Activated B cell treated with CpG ODN at 0.5 μM for 24 hours (primary cell): ENCODE measurements at regions of chr1 and their contacts with region 1.

Region 1: GRCh38 chr1:161706482-161707347 is at the start of gene FCRLA:
- DNase-seq: no peak
- ATAC-seq: peak; percentile 53
- H3K4me3 Mint-ChIP-seq: no peak within 1 kb of the TSS
- H3K27ac Mint-ChIP-seq: no peak within 1 kb of the TSS
- H3K4me1 Mint-ChIP-seq: peaks cover 28% of the 10 kb centered on the region
- H3K27me3 Mint-ChIP-seq: no peaks in the 10 kb centered on the region
- CTCF ChIP-seq: no peak
- total RNA-seq, gene FCRLA: 175 and 178 TPM in 2 replicates

Region 2: DNA sequence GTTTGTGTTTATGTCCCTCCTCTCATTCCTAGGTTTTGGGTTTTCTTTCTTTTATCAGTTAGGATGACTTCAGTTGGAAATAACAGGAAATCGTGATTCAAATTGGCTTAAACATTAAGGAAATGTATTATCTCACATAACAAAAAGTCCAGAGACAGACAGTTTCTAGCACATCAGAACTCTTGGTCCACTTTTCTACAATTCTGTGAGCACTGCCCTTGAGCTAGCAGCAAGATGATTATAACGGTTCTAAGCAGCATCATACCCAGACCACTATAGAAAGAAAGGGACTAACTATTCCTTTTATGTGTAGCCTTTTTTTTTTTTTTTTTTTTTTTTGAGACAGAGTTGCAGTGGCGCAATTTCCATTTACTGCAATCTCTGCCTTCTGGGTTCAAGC is 24.8 kb before region 1 on chr1:
- CTCF ChIA-PET with region 1: no interaction called
- POLR2A ChIA-PET with region 1: interaction called, 5 read pairs
- intact Hi-C with region 1: loop called (anchors 2 kb)
- DNase-seq: no peak
- ATAC-seq: no peak
- H3K4me3 Mint-ChIP-seq: no peak overlapping the region
- H3K27ac Mint-ChIP-seq: peak overlapping the region; percentile 1
- H3K4me1 Mint-ChIP-seq: no peaks in the 10 kb centered on the region
- H3K27me3 Mint-ChIP-seq: no peaks in the 10 kb centered on the region
- CTCF ChIP-seq: no peak

Region 3: DNA sequence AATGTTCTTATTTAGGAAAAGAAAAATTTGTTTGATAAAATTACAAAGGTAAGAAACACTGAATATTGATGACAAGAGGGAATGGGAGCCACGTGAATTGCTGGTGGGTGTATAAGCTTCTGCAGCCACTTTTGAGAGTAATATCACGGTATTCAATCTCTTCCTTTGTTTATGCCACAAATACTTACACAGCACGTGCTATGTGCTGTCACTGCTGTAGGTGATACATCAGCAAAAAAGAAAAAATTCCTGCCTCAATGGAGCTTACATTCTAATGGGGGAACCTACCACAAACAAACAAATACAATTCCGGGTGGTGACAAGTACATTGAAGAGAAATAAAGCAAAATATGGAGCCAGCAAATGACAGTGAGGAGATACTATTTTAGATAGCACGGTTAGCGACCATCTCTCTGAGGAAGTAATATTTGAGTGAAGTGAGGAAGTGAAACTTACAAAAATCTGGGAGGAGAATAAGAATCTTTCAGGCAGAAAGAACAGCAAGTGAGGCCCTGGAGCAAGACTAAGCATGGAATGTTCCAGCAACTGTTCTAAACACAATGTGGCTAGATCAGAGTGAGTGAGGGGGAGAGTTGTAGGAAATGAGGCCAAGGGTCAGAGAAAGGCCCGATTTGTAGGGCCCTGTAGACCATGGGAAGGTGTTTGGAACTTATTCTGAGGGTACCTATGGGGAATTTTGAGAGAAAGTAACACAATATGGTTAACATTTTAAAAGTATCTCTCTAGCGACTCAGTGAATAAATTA is 12.0 kb after region 1 on chr1:
- CTCF ChIA-PET with region 1: interaction called, 3 read pairs
- POLR2A ChIA-PET with region 1: interaction called, 34 read pairs
- intact Hi-C with region 1: loop called (anchors 1 kb)
- DNase-seq: no peak
- ATAC-seq: peak; percentile 85
- H3K4me3 Mint-ChIP-seq: peak overlapping the region; percentile 63
- H3K27ac Mint-ChIP-seq: peak overlapping the region; percentile 90
- H3K4me1 Mint-ChIP-seq: peaks cover 68% of the 10 kb centered on the region
- H3K27me3 Mint-ChIP-seq: no peaks in the 10 kb centered on the region
- CTCF ChIP-seq: no peak

Region 4: GRCh38 chr1:161726596-161727457 is 20.1 kb after region 1 on chr1:
- CTCF ChIA-PET with region 1: interaction called, 7 read pairs
- POLR2A ChIA-PET with region 1: interaction called, 143 read pairs
- intact Hi-C with region 1: loop called (anchors 1 kb)
- DNase-seq: peak; percentile 70
- ATAC-seq: peak; percentile 72
- H3K4me3 Mint-ChIP-seq: peak overlapping the region; percentile 96
- H3K27ac Mint-ChIP-seq: peak overlapping the region; percentile 94
- H3K4me1 Mint-ChIP-seq: peaks cover 61% of the 10 kb centered on the region
- H3K27me3 Mint-ChIP-seq: no peaks in the 10 kb centered on the region
- CTCF ChIP-seq: no peak